Activated CD4-positive, alpha-beta T cell treated with anti-CD3 and anti-CD28 coated beads, Interleukin-2, amount 10 ng/mL, durations not matched to agents 24 days and 14 days (primary cell): ENCODE measurements at regions of chr15 and their contacts with region 1.

Region 1: DNA sequence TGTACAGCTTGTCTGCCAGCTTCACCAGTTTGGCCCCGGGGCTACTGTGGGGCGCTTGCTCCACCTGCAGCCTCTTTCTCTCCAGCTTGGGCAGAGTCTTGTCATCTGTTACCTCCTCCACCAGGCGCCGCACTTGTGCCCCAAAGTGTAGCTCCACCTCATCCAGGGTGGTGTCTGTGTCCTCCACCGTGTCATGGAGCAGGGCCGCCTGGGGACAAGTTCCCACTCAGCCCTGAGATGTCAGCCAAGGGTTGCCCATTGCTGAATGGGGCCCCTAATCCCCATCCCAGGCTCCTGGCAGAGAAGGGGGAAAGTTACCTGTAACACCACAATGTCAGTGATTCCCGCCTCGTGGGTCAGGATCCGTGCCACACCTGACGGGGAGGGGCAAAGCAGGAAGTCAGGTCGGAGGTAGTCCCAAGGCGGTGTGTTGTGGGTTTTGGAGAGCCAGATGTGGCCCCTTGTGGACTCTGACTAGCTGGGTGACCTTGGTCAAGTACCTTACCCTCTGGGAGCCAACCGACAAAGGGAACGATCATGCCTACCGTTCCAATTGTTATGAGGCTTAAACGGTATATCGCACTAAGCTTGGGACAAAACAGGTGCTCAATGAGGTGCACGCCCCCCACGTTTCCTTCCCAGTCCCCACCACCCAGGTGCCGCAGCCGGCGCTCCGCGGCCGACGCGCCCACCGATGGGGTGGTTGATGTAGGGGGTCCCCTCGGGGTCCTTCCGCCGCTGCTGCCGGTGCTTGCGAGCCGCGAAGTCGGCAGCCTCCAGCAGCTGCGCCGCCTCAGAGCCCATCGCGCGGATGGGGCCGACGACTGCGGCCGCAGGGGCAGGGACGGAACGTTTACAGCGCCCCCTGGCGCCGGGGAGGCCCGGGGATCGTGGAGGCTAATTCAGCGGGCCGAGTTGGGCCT is at the start of gene HDDC3:
- DNase-seq: peak; percentile 98
- H3K4me3 Mint-ChIP-seq: peak within 1 kb of the TSS; percentile 99
- H3K27ac Mint-ChIP-seq: peak within 1 kb of the TSS; percentile 99
- H3K4me1 Mint-ChIP-seq: peaks cover 49% of the 10 kb centered on the region
- H3K27me3 Mint-ChIP-seq: no peaks in the 10 kb centered on the region
- total RNA-seq, gene HDDC3: 36.3 and 39.9 TPM in 2 replicates

Region 2: GRCh38 chr15:89334510-89335288 is 1597.3 kb before region 1 on chr15 and contains the start of gene POLG:
- intact Hi-C with region 1: loop called (anchors 10 kb)
- DNase-seq: peak; percentile 100
- H3K4me3 Mint-ChIP-seq: peak within 1 kb of the TSS; percentile 87
- H3K27ac Mint-ChIP-seq: peak within 1 kb of the TSS; percentile 95
- H3K4me1 Mint-ChIP-seq: peaks cover 50% of the 10 kb centered on the region
- H3K27me3 Mint-ChIP-seq: peaks cover 9% of the 10 kb centered on the region
- total RNA-seq, gene POLG: 124 and 134 TPM in 2 replicates

Region 3: DNA sequence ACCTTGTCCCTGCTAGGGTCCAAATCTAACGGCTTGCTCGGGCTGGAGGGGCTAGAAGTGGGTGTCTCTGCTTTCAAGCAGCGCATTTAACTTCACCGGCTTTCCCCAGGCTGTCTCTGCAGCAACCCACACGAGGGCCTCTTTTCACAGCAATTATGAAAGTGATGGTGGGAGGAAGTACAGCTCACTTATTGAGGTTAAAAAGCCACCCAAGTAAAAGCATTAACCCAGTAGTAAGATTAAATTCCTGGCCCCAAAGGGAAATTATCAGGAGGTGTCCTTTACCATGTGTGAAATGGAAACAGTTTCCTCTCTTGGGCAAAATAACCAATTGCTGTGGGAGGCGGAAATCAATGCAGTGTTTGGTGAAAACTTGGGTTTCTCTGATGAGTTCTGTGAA is 625.4 kb before region 1 on chr15:
- intact Hi-C with region 1: loop called (anchors 5 kb)
- DNase-seq: peak; percentile 80
- H3K4me3 Mint-ChIP-seq: peak overlapping the region; percentile 66
- H3K27ac Mint-ChIP-seq: peak overlapping the region; percentile 86
- H3K4me1 Mint-ChIP-seq: peaks cover 46% of the 10 kb centered on the region
- H3K27me3 Mint-ChIP-seq: no peaks in the 10 kb centered on the region

Region 4: DNA sequence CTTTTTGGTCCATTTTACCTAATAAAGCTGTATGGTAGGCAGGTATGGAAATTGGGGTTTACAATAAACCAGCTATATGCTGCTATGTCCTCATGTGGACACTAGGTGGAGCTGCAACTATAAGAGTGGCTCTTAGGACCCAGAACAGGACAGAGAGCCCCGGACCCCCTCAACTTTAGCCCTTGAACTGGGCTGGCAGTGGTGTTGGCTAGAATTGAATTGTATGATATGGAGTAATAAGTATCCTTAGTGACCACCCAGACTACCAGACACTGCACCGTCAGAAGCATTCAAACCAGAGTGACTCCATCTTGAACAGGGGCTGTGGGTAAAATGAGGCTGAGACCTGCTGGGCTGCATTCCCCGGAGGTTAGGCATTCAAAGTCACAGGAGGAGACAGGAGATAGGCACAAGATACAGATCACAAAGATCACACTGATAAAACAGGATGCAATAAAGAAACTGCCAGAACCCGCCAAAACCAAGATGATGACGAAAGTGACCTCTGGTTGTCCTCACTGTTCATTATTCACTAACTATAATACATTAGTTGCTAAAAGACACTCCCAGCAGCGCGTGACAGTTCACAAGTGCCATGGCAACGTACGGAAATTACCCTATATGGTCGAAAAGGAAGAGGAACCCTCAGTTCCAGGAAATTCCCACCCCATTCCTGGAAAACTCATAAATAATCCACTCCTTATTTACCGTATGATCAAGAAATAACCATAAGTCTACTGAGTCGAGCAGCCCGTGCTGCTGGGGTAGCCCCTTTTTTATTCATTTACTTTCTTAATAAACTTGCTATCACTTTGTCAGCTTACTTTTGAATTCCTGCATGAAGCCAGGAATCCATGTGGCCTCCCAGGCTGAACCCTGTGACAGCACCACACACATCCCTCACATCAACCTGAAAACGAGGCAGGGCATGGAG is 283.6 kb before region 1 on chr15:
- intact Hi-C with region 1: loop called (anchors 2 kb)
- DNase-seq: peak; percentile 93
- H3K4me3 Mint-ChIP-seq: peak overlapping the region; percentile 70
- H3K27ac Mint-ChIP-seq: peak overlapping the region; percentile 91
- H3K4me1 Mint-ChIP-seq: peaks cover 39% of the 10 kb centered on the region
- H3K27me3 Mint-ChIP-seq: no peaks in the 10 kb centered on the region

Region 5: GRCh38 chr15:90818251-90819210 is 113.5 kb before region 1 on chr15:
- intact Hi-C with region 1: loop called (anchors 5 kb)
- DNase-seq: peak; percentile 86
- H3K4me3 Mint-ChIP-seq: peak overlapping the region; percentile 80
- H3K27ac Mint-ChIP-seq: peak overlapping the region; percentile 99
- H3K4me1 Mint-ChIP-seq: peaks cover 69% of the 10 kb centered on the region
- H3K27me3 Mint-ChIP-seq: no peaks in the 10 kb centered on the region

Region 6: DNA sequence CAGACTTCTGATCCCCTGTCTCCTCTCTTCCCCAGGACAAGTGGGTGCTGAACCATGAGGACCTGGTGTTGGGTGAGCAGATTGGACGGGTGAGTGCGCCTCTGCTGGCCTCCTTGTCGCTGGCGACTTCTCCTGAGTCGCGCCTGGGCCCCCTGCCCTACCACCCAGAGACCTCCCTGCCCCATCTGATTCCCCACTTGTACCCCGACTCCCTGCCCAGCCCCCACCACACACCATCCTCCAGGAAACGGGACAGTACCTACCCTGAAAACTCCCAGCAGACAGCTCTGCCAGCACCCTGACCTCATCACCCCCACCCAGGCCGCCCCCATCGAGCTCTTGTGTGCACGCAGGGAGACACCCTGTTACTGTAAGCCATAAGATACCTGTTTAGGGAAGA is 40.0 kb before region 1 on chr15:
- intact Hi-C with region 1: no loop called
- DNase-seq: no peak
- H3K4me3 Mint-ChIP-seq: no peak overlapping the region
- H3K27ac Mint-ChIP-seq: peak overlapping the region; percentile 37
- H3K4me1 Mint-ChIP-seq: peaks cover 8% of the 10 kb centered on the region
- H3K27me3 Mint-ChIP-seq: no peaks in the 10 kb centered on the region

Region 7: GRCh38 chr15:90902040-90902839 is 29.8 kb before region 1 on chr15:
- intact Hi-C with region 1: loop called (anchors 1 kb)
- DNase-seq: peak; percentile 93
- H3K4me3 Mint-ChIP-seq: peak overlapping the region; percentile 87
- H3K27ac Mint-ChIP-seq: peak overlapping the region; percentile 70
- H3K4me1 Mint-ChIP-seq: peaks cover 26% of the 10 kb centered on the region
- H3K27me3 Mint-ChIP-seq: no peaks in the 10 kb centered on the region

Region 8: GRCh38 chr15:90994417-90995311 is 62.7 kb after region 1 on chr15 and contains the start of gene PRC1:
- intact Hi-C with region 1: loop called (anchors 1 kb)
- DNase-seq: peak; percentile 100
- H3K4me3 Mint-ChIP-seq: peak within 1 kb of the TSS; percentile 100
- H3K27ac Mint-ChIP-seq: peak within 1 kb of the TSS; percentile 100
- H3K4me1 Mint-ChIP-seq: peaks cover 27% of the 10 kb centered on the region
- H3K27me3 Mint-ChIP-seq: no peaks in the 10 kb centered on the region
- total RNA-seq, gene PRC1: 85.0 and 86.2 TPM in 2 replicates